K562 (cell line): ENCODE measurements at regions of chr14 and their contacts with region 1.

Region 1: DNA sequence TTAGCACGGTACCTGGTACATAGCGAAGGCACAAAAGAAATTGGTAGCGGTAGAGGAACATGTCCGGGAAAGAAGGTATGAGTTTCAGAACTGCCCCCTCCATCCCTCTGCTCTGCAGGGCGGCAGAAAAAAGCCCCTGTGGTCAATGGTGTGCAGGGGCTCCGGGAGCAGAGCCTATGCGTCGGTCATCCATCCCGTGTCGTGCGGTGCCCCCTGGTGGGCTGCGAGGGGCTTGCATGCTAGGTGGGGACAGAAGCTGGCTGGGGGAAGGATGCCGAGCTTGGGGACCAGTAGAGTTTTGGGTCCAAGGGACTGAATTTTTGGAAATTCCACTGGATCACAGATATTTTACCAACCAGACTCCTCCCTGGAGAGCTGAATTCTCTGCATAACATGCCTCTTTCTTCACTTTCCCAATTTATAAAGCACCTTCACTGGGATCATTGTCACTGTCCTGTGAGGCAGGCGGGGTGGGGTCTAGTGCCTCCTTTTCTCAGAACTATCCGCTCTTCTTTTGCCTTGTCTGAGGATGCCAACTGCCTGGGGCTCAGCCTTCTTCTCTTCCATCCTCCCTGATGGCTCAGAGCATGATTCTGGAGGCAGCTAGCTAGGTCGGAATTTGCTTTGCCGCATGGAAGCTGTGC is 148.7 kb downstream of the SMOC1 start:
- DNase-seq: peak; percentile 60 to 80 (median 76)
- ATAC-seq: peak; percentile 92
- H3K4me3 ChIP-seq: no peak overlapping the region
- H3K27ac ChIP-seq: no peak overlapping the region
- H3K4me1 ChIP-seq: no peaks in the 10 kb centered on the region
- H3K27me3 ChIP-seq: peaks cover 0 to 13% of the 10 kb centered on the region in 2 experiments; a peak in 1 of 5 replicates
- CTCF ChIP-seq: peak; percentile 75 to 80 (median 77)
- EP300 ChIP-seq: no peak
- POLR2A ChIP-seq: no peak
- RAD21 ChIP-seq: peak; percentile 68 to 82

Region 2: GRCh38 chr14:69586404-69586803 is 441.5 kb before region 1 on chr14:
- CTCF ChIA-PET with region 1: no interaction called
- POLR2A ChIA-PET with region 1: no interaction called
- in situ Hi-C with region 1: no loop called
- intact Hi-C with region 1: loop called (anchors 2 kb)
- DNase-seq: no peak
- ATAC-seq: no peak
- H3K4me3 ChIP-seq: no peak overlapping the region
- H3K27ac ChIP-seq: no peak overlapping the region
- H3K4me1 ChIP-seq: peaks cover 0 to 2% of the 10 kb centered on the region in 2 experiments; a peak in 2 of 5 replicates
- H3K27me3 ChIP-seq: no peaks in the 10 kb centered on the region
- CTCF ChIP-seq: no peak
- EP300 ChIP-seq: no peak
- POLR2A ChIP-seq: no peak
- RAD21 ChIP-seq: no peak